ENCODE measurements at regions of chr15 and their contacts with region 1.

Region 1: GRCh38 chr15:40857601-40858341 is 13.9 kb downstream of the SPINT1 start:
- DNase-seq: no peak
- H3K4me3 ChIP-seq: no peak overlapping the region
- H3K27me3 ChIP-seq: no peaks in the 10 kb centered on the region; the same call in 1 of the 2 replicates
- CTCF ChIP-seq: peak; percentile 100

Region 2: GRCh38 chr15:40554164-40554530 is 303.6 kb before region 1 on chr15:
- CTCF ChIA-PET with region 1: no interaction called
- POLR2A ChIA-PET with region 1: no interaction called
- DNase-seq: no peak
- H3K4me3 ChIP-seq: no peak overlapping the region
- H3K27me3 ChIP-seq: no peaks in the 10 kb centered on the region
- CTCF ChIP-seq: no peak

Region 3: DNA sequence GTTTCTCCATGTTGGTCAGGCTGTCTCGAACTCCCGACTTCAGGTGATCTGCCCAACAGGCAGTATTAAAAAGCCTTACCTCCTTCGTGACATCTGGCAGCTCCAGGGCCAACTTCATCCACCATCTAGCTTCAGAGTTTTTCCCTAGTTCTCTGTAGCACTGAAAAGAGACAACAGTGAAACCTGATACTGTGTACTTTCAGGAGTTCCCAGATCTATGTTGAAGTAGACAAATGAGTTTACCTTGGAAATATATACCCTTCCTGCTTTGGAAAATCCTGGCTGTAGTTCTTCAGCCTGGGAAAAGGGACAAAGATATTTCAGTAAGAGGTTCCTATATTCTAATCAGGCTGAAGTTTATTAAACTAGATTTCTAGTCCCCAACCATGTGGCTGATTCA is 120.7 kb before region 1 on chr15:
- CTCF ChIA-PET with region 1: no interaction called
- POLR2A ChIA-PET with region 1: no interaction called
- DNase-seq: no peak
- H3K4me3 ChIP-seq: no peak overlapping the region
- H3K27me3 ChIP-seq: no peaks in the 10 kb centered on the region
- CTCF ChIP-seq: no peak

Region 4: GRCh38 chr15:40838776-40839175 is 19.0 kb before region 1 on chr15:
- CTCF ChIA-PET with region 1: interaction called, 81 read pairs
- POLR2A ChIA-PET with region 1: no interaction called
- DNase-seq: no peak
- H3K4me3 ChIP-seq: no peak overlapping the region
- H3K27me3 ChIP-seq: peaks cover 7% of the 10 kb centered on the region
- CTCF ChIP-seq: no peak

Region 5: DNA sequence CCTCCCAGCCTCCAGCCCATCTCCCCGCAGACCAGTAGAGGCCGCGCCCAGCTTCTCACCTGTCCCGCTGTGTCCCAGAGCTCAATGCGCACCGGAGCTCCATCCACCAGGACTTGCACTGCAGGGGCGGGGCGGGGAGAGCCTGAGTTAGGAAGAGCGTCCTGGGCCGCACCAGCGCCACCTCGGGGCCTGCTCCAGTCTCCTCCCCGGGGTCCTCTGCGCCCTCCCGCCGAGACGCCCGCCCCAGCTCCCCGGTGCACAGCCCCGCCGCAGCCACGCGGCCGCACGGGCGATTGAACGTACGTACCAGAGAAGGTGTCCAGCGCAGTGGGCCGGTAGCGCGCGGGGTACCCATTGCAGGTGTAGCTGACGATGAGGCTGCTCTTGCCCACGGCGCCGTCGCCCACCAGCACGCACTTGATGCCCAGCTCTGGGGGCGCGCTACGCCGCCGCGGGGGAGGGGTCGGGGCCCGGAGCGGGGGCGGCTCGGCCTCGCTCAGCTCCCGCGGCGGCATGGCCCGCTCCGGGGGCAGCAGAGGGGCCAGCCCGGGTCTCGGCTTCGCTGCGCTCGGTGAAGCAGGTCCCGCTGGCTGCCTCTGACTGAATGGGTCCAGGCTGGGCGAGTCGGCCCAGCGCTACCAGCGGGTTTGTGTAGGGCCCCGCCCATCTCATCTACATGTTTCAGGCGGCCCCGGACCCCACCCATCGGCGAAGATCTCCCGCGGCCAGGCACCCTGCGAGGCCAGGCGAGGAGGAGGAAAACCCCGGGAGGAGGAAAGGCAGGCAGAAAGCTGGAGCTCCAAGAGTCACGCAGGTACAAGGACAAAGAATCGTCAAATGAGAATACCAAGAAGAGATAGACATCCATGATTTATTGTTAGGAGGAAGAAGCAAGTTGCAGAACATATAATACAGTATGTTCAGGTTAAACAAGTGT is 16.1 kb after region 1 on chr15 and contains the start of gene RHOV:
- CTCF ChIA-PET with region 1: interaction called, 71 read pairs
- POLR2A ChIA-PET with region 1: no interaction called
- DNase-seq: no peak
- H3K4me3 ChIP-seq: peak within 1 kb of the TSS; percentile 46
- H3K27me3 ChIP-seq: peaks cover 8% of the 10 kb centered on the region
- CTCF ChIP-seq: peak; percentile 35; the same call in 1 of the 2 replicates
- polyA plus RNA-seq, gene RHOV: 0.13 and 0.28 TPM in 2 replicates

Region 6: DNA sequence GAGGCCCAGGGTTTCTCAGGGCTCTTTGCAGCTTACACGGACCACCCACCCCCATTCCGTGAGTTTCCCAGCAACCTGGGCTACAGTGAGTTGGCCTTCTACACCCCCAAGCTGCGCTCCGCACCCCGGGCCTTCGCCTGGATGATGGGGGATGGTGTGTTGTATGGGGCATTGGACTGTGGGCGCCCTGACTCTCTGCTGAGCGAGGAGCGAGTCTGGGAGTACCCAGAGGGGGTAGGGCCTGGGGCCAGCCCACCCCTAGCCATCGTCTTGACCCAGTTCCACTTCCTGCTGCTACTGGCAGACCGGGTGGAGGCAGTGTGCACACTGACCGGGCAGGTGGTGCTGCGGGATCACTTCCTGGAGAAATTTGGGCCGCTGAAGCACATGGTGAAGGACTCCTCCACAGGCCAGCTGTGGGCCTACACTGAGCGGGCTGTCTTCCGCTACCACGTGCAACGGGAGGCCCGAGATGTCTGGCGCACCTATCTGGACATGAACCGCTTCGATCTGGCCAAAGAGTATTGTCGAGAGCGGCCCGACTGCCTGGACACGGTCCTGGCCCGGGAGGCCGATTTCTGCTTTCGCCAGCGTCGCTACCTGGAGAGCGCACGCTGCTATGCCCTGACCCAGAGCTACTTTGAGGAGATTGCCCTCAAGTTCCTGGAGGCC is 41.9 kb after region 1 on chr15:
- CTCF ChIA-PET with region 1: interaction called, 20 read pairs
- POLR2A ChIA-PET with region 1: interaction called, 7 read pairs
- DNase-seq: no peak
- H3K4me3 ChIP-seq: no peak overlapping the region
- H3K27me3 ChIP-seq: no peaks in the 10 kb centered on the region
- CTCF ChIP-seq: no peak

Region 7: GRCh38 chr15:41180206-41180789 is 322.5 kb after region 1 on chr15:
- CTCF ChIA-PET with region 1: interaction called, 17 read pairs
- POLR2A ChIA-PET with region 1: no interaction called
- DNase-seq: no peak
- H3K4me3 ChIP-seq: no peak overlapping the region
- H3K27me3 ChIP-seq: no peaks in the 10 kb centered on the region
- CTCF ChIP-seq: no peak

Region 8: DNA sequence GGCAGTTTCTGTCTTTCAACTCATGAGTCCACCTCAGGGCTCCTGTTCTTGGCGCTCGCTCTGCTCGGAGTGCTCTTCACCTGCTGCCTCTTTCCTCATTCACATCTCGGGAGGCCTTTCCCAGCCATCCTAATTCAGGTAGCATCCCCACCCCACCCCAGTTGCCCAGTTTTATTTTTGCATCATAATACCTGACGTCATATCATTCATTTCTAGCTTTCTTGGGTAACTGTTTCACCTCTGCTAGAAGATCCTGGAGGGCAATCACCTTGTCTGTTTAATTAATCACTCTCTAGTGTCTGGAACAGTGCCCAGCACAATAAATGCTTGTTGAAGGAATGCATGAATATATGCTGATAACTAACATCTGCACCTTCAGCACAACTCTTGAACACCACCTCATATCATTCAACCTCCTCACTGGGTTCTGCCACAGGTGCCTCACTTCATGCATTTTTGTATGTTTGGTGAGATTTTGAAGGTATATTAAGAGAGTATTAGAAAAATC is 482.5 kb after region 1 on chr15:
- CTCF ChIA-PET with region 1: no interaction called
- POLR2A ChIA-PET with region 1: no interaction called
- DNase-seq: no peak
- H3K4me3 ChIP-seq: no peak overlapping the region
- H3K27me3 ChIP-seq: no peaks in the 10 kb centered on the region
- CTCF ChIP-seq: no peak